Prostate gland (tissue), 2 donors: ENCODE measurements at regions of chr9 and their contacts with region 1.

Region 1: GRCh38 chr9:105064315-105065097 is 136.6 kb upstream of the ABCA1 start:
- DNase-seq: peak; percentile 91
- H3K4me3 ChIP-seq: no peak overlapping the region
- H3K27ac ChIP-seq: peak overlapping the region; percentile 50 to 70
- H3K4me1 ChIP-seq: no peaks in the 10 kb centered on the region
- H3K27me3 ChIP-seq: no peaks in the 10 kb centered on the region
- CTCF ChIP-seq: peak in 1 of 4 experiments; percentile 16
- POLR2A ChIP-seq: peak; percentile 9

Region 2: GRCh38 chr9:104863180-104863883 is 201.2 kb before region 1 on chr9:
- intact Hi-C with region 1: loop called (anchors 10 kb)
- DNase-seq: peak; percentile 25
- H3K4me3 ChIP-seq: no peak overlapping the region
- H3K27ac ChIP-seq: no peak overlapping the region
- H3K4me1 ChIP-seq: peaks cover under 1% of the 10 kb centered on the region
- H3K27me3 ChIP-seq: no peaks in the 10 kb centered on the region
- CTCF ChIP-seq: peak; percentile 41 to 74 (median 64)
- POLR2A ChIP-seq: no peak

Region 3: GRCh38 chr9:104991144-104991953 is 73.2 kb before region 1 on chr9:
- intact Hi-C with region 1: loop called (anchors 5 kb)
- DNase-seq: peak; percentile 80
- H3K4me3 ChIP-seq: peak overlapping the region; percentile 46 to 61
- H3K27ac ChIP-seq: peak overlapping the region; percentile 79 to 82
- H3K4me1 ChIP-seq: no peaks in the 10 kb centered on the region
- H3K27me3 ChIP-seq: no peaks in the 10 kb centered on the region
- CTCF ChIP-seq: peak in 1 of 4 experiments; percentile 6
- POLR2A ChIP-seq: no peak

Region 4: DNA sequence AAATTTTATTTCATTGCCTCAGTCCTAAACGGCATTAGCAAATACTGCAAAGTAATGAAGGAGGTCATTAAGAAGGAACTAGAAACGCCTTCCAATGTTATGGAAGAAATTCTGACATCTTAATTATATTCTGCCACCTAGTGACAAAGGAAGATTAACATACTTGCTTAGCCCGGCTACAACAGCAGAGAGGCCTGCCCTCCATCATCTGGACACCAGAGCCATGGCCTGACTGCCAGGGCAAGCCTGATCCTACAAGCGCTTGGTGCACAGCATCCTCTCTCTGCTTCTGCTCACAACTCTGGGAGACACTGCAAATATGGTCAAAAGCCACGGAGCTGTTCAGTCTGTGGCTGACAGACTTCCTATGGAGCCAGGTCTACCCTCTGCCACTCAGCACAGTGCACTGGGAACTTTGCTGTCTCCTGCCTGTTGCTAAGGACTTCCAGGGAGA is 92.7 kb after region 1 on chr9:
- intact Hi-C with region 1: loop called (anchors 10 kb)
- DNase-seq: peak; percentile 26
- H3K4me3 ChIP-seq: no peak overlapping the region
- H3K27ac ChIP-seq: no peak overlapping the region
- H3K4me1 ChIP-seq: no peaks in the 10 kb centered on the region
- H3K27me3 ChIP-seq: no peaks in the 10 kb centered on the region
- CTCF ChIP-seq: peak in 3 of 4 experiments; percentile 54 to 66 (median 60)
- POLR2A ChIP-seq: no peak